Activated CD8-positive, alpha-beta T cell treated with anti-CD3 and anti-CD28 coated beads, Interleukin-2, amount 10 ng/mL, durations not matched to agents 7 days and 5 days (primary cell): ENCODE measurements at regions of chr20 and their contacts with region 1.

Region 1: GRCh38 chr20:32982617-32983458 is 21.4 kb downstream of the SUN5 start:
- DNase-seq: no peak
- ATAC-seq: no peak
- H3K4me3 Mint-ChIP-seq: no peak overlapping the region
- H3K27ac Mint-ChIP-seq: no peak overlapping the region
- H3K4me1 Mint-ChIP-seq: peaks cover 2% of the 10 kb centered on the region
- H3K27me3 Mint-ChIP-seq: no peaks in the 10 kb centered on the region

Region 2: DNA sequence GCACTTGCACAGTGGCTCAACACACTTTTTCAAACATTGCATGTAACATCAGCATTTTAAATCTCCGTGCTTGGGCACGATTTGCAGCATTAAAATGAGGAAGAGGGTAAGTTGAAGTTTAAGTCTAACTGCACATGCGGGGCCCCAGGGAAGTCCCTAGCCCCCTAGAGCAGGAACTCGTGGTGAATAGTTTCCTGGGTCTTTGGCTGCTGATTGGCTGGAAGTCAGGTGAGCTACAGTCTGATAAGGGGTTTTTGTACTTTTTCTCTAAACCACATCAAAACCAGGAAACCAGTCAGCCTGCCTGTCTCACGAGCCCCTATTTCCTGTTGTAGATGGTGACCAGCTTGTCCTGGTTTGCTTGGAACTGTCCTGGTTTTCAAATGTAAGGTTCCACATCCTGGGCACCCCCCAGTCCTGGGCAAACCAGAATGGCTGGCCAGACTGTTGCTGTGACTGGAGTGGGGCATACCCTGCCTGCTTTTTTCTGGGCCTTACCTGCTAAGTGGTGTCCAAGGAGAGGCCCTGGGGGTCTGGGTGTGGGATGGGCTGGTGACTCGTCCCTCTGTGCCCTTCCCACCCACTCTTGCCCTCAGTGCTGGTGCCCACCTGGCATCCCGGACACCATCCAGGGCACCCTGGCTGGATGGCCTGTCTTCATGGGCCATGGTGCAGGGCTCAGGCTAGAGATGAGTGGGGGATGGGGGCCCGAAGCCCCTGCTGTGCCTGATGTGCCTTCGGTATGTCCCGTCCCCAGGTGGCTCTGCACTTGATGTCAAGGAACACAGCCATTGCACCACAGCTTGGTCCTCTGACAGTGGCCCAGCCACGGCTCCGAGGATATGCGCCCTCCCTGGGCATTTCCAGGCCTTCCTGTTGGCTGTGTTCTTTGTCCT is 10.4 kb before region 1 on chr20:
- CTCF ChIA-PET with region 1: interaction called, 4 read pairs
- POLR2A ChIA-PET with region 1: interaction called, 10 read pairs
- DNase-seq: peak; percentile 93
- ATAC-seq: peak; percentile 85
- H3K4me3 Mint-ChIP-seq: peak overlapping the region; percentile 40
- H3K27ac Mint-ChIP-seq: no peak overlapping the region
- H3K4me1 Mint-ChIP-seq: peaks cover 47% of the 10 kb centered on the region
- H3K27me3 Mint-ChIP-seq: no peaks in the 10 kb centered on the region